ENCODE measurements at regions of chr2 and their contacts with region 1.

Region 1: DNA sequence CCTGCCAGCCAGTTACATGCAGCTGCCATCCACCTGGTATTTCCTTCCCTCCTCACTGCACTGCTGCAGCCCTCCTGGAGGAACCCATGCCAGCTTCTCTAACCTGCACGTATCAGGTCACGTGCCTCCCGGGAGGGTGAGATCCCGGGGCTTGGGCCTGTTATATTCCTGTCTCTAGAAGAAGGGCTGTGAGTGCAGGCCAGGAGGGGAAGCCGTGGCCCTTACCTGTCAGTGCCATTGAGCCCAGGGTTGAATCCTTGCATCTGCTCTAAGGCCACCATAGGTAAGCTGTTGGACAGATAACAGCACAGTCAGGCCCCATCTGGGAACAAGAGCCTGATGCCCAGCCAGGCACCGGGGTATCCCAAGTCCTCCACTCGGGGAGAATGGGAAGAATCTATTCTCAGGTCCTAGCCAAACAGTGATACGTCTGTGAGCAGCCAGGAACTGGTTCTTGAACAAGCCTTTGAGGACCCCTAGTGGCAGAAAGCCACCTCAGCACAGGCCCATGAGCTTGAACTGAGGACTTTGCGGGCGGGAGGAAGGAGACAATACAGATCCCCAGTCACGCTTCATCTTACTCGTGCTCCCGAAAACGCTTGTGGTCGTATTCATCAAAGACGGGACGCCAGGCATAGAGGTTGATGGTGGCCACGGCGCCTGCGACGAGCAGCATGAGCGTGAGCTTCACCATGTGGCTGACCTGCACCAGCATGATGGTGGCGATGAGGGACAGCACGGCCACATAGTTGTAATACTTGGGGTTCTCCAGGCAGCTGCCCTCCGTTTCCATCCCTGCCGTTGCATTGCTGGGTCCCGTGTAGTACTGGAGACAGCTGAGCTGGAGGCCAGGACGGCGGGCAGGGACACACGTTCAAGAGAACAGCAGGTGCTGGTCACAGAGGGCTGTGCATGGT is 34.4 kb downstream of the CENPO start:
- DNase-seq: peak; percentile 54
- H3K4me3 ChIP-seq: no peak overlapping the region
- H3K27ac ChIP-seq: no peak overlapping the region
- H3K4me1 ChIP-seq: no peaks in the 10 kb centered on the region
- H3K27me3 ChIP-seq: no peaks in the 10 kb centered on the region
- CTCF ChIP-seq: peak; percentile 88 to 90

Region 2: GRCh38 chr2:24409700-24410556 is 417.7 kb before region 1 on chr2:
- CTCF ChIA-PET with region 1: interaction called, 7 read pairs
- dilution Hi-C with region 1: no loop called
- in situ Hi-C with region 1: loop called (anchors 5 to 10 kb)
- intact Hi-C with region 1: loop called (anchors 1 kb)
- DNase-seq: peak; percentile 49
- H3K4me3 ChIP-seq: no peak overlapping the region
- H3K27ac ChIP-seq: no peak overlapping the region
- H3K4me1 ChIP-seq: peaks cover 1% of the 10 kb centered on the region
- H3K27me3 ChIP-seq: no peaks in the 10 kb centered on the region
- CTCF ChIP-seq: peak; percentile 81 to 84

Region 3: GRCh38 chr2:24421668-24422067 is 405.9 kb before region 1 on chr2:
- CTCF ChIA-PET with region 1: interaction called, 17 read pairs
- dilution Hi-C with region 1: no loop called
- in situ Hi-C with region 1: loop called in 1 of 2 experiments (anchors 10 kb)
- intact Hi-C with region 1: loop called (anchors 1 kb)
- DNase-seq: peak; percentile 33
- H3K4me3 ChIP-seq: no peak overlapping the region
- H3K27ac ChIP-seq: no peak overlapping the region
- H3K4me1 ChIP-seq: no peaks in the 10 kb centered on the region
- H3K27me3 ChIP-seq: peaks cover 2% of the 10 kb centered on the region
- CTCF ChIP-seq: peak; percentile 35 to 69

Region 4: DNA sequence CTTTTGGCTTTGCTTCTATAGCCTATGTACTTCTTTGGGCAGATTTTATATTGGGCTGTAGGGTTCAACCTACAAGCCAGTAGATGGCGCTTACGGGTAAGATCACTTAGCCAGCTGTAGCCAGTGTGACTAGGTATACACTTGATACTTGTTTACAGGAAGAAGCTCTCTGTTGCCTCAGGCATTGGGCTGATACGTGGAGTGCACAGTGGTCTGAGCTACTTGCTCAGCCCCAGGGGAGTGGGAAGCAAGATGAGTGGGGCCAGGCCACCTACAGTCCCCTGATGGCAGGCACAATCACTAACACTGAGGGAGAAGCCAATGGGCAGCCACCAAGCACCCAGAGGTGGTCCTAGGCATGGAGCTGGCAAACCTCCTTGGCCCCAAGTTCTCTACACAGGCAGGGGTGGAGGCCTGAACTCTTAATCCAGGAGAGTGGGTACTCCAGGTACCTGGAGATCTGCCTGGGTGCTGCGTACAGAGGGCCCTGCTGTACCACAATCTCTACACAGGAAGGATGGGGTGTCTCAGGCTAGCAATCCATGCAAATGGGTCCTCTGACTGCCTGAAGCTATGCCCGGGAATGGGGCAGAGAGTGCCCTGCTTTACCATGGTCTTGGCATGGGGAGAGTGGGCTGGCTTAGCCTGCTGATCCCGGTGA is 214.3 kb before region 1 on chr2:
- CTCF ChIA-PET with region 1: interaction called, 3 read pairs
- dilution Hi-C with region 1: no loop called
- in situ Hi-C with region 1: no loop called
- intact Hi-C with region 1: loop called (anchors 1 kb)
- DNase-seq: peak; percentile 32
- H3K4me3 ChIP-seq: no peak overlapping the region
- H3K27ac ChIP-seq: no peak overlapping the region
- H3K4me1 ChIP-seq: no peaks in the 10 kb centered on the region
- H3K27me3 ChIP-seq: no peaks in the 10 kb centered on the region
- CTCF ChIP-seq: peak; percentile 28 to 57

Region 5: GRCh38 chr2:24792874-24793760 is 34.5 kb before region 1 on chr2 and contains the starts of genes CENPO and PTRHD1:
- CTCF ChIA-PET with region 1: no interaction called
- dilution Hi-C with region 1: no loop called
- in situ Hi-C with region 1: no loop called
- intact Hi-C with region 1: loop called (anchors 1 kb)
- DNase-seq: peak; percentile 95
- H3K4me3 ChIP-seq: peak within 1 kb of the TSS; percentile 64 to 78 (median 71)
- H3K27ac ChIP-seq: peak within 1 kb of the TSS; percentile 88
- H3K4me1 ChIP-seq: peaks cover 24% of the 10 kb centered on the region
- H3K27me3 ChIP-seq: no peaks in the 10 kb centered on the region
- CTCF ChIP-seq: peak; percentile 55 to 79
- total RNA-seq, gene CENPO: 7.2 to 27.7 TPM
- total RNA-seq, gene PTRHD1: 14.8 to 28.3 TPM

Region 6: GRCh38 chr2:25201265-25201664 is 373.7 kb after region 1 on chr2:
- CTCF ChIA-PET with region 1: no interaction called
- dilution Hi-C with region 1: no loop called
- in situ Hi-C with region 1: no loop called
- intact Hi-C with region 1: loop called (anchors 1 kb)
- DNase-seq: no peak
- H3K4me3 ChIP-seq: no peak overlapping the region
- H3K27ac ChIP-seq: no peak overlapping the region
- H3K4me1 ChIP-seq: peaks cover 8% of the 10 kb centered on the region
- H3K27me3 ChIP-seq: peaks cover 2% of the 10 kb centered on the region
- CTCF ChIP-seq: peak in 1 of 2 donors; percentile 29